CD4-positive, alpha-beta memory T cell (primary cell): ENCODE measurements at regions of chr15 and their contacts with region 1.

Region 1: GRCh38 chr15:38683382-38684242 is 119.0 kb upstream of the RASGRP1 start:
- DNase-seq: peak; percentile 68 to 76 (median 73)
- H3K4me3 ChIP-seq: no peak overlapping the region
- H3K4me3 Mint-ChIP-seq: peak overlapping the region in 7 of 8 donors; percentile 27 to 77 (median 55)
- H3K27ac ChIP-seq: peak overlapping the region; percentile 31
- H3K27ac Mint-ChIP-seq: peak overlapping the region; percentile 78 to 96 (median 94)
- H3K4me1 ChIP-seq: peaks cover 65% of the 10 kb centered on the region
- H3K4me1 Mint-ChIP-seq: peaks cover 61 to 73% (median 63%) of the 10 kb centered on the region in 4 donors
- H3K27me3 ChIP-seq: no peaks in the 10 kb centered on the region
- H3K27me3 Mint-ChIP-seq: no peaks in the 10 kb centered on the region

Region 2: GRCh38 chr15:37574985-37575384 is 1108.6 kb before region 1 on chr15:
- CTCF ChIA-PET with region 1: no interaction called
- POLR2A ChIA-PET with region 1: no interaction called
- intact Hi-C with region 1: no loop called
- DNase-seq: no peak
- H3K4me3 ChIP-seq: no peak overlapping the region
- H3K4me3 Mint-ChIP-seq: no peak overlapping the region
- H3K27ac ChIP-seq: no peak overlapping the region
- H3K27ac Mint-ChIP-seq: no peak overlapping the region
- H3K4me1 ChIP-seq: no peaks in the 10 kb centered on the region
- H3K4me1 Mint-ChIP-seq: no peaks in the 10 kb centered on the region
- H3K27me3 ChIP-seq: no peaks in the 10 kb centered on the region
- H3K27me3 Mint-ChIP-seq: no peaks in the 10 kb centered on the region

Region 3: GRCh38 chr15:38440353-38441129 is 243.1 kb before region 1 on chr15:
- CTCF ChIA-PET with region 1: interaction called, 83 read pairs
- POLR2A ChIA-PET with region 1: interaction called, 6 read pairs
- intact Hi-C with region 1: no loop called
- DNase-seq: peak in 4 of 5 donors; percentile 59 to 66 (median 62)
- H3K4me3 ChIP-seq: no peak overlapping the region
- H3K4me3 Mint-ChIP-seq: peak overlapping the region in 1 of 8 donors; percentile 55
- H3K27ac ChIP-seq: no peak overlapping the region
- H3K27ac Mint-ChIP-seq: peak overlapping the region in 1 of 7 donors; percentile 12
- H3K4me1 ChIP-seq: peaks cover 5% of the 10 kb centered on the region
- H3K4me1 Mint-ChIP-seq: peaks cover 0 to 7% (median 3%) of the 10 kb centered on the region in 4 donors
- H3K27me3 ChIP-seq: no peaks in the 10 kb centered on the region
- H3K27me3 Mint-ChIP-seq: peaks cover 20 to 21% of the 10 kb centered on the region in 2 donors

Region 4: GRCh38 chr15:38521316-38521715 is 162.3 kb before region 1 on chr15:
- CTCF ChIA-PET with region 1: interaction called, 14 read pairs
- POLR2A ChIA-PET with region 1: interaction called, 4 read pairs
- intact Hi-C with region 1: no loop called
- DNase-seq: no peak
- H3K4me3 ChIP-seq: no peak overlapping the region
- H3K4me3 Mint-ChIP-seq: no peak overlapping the region
- H3K27ac ChIP-seq: no peak overlapping the region
- H3K27ac Mint-ChIP-seq: peak overlapping the region; percentile 57 to 87 (median 78)
- H3K4me1 ChIP-seq: peaks cover 39% of the 10 kb centered on the region
- H3K4me1 Mint-ChIP-seq: peaks cover 41 to 61% (median 51%) of the 10 kb centered on the region in 4 donors
- H3K27me3 ChIP-seq: no peaks in the 10 kb centered on the region
- H3K27me3 Mint-ChIP-seq: no peaks in the 10 kb centered on the region

Region 5: GRCh38 chr15:38554354-38554753 is 129.3 kb before region 1 on chr15:
- CTCF ChIA-PET with region 1: interaction called, 717 read pairs
- POLR2A ChIA-PET with region 1: interaction called, 452 read pairs
- intact Hi-C with region 1: no loop called
- DNase-seq: peak in 3 of 5 donors; percentile 37 to 74 (median 51)
- H3K4me3 ChIP-seq: peak overlapping the region in 1 of 2 donors; percentile 10
- H3K4me3 Mint-ChIP-seq: peak overlapping the region; percentile 3 to 99 (median 89)
- H3K27ac ChIP-seq: peak overlapping the region; percentile 89
- H3K27ac Mint-ChIP-seq: peak overlapping the region; percentile 64 to 97 (median 79)
- H3K4me1 ChIP-seq: peaks cover 100% of the 10 kb centered on the region
- H3K4me1 Mint-ChIP-seq: peaks cover 80 to 94% (median 88%) of the 10 kb centered on the region in 4 donors
- H3K27me3 ChIP-seq: no peaks in the 10 kb centered on the region
- H3K27me3 Mint-ChIP-seq: no peaks in the 10 kb centered on the region

Region 6: GRCh38 chr15:38647683-38648082 is 35.9 kb before region 1 on chr15:
- CTCF ChIA-PET with region 1: interaction called, 451 read pairs
- POLR2A ChIA-PET with region 1: interaction called, 520 read pairs
- intact Hi-C with region 1: no loop called
- DNase-seq: no peak
- H3K4me3 ChIP-seq: no peak overlapping the region
- H3K4me3 Mint-ChIP-seq: peak overlapping the region in 2 of 8 donors; percentile 6 to 52
- H3K27ac ChIP-seq: peak overlapping the region; percentile 4
- H3K27ac Mint-ChIP-seq: peak overlapping the region; percentile 70 to 96 (median 91)
- H3K4me1 ChIP-seq: peaks cover 81% of the 10 kb centered on the region
- H3K4me1 Mint-ChIP-seq: peaks cover 55 to 78% (median 68%) of the 10 kb centered on the region in 4 donors
- H3K27me3 ChIP-seq: no peaks in the 10 kb centered on the region
- H3K27me3 Mint-ChIP-seq: no peaks in the 10 kb centered on the region

Region 7: DNA sequence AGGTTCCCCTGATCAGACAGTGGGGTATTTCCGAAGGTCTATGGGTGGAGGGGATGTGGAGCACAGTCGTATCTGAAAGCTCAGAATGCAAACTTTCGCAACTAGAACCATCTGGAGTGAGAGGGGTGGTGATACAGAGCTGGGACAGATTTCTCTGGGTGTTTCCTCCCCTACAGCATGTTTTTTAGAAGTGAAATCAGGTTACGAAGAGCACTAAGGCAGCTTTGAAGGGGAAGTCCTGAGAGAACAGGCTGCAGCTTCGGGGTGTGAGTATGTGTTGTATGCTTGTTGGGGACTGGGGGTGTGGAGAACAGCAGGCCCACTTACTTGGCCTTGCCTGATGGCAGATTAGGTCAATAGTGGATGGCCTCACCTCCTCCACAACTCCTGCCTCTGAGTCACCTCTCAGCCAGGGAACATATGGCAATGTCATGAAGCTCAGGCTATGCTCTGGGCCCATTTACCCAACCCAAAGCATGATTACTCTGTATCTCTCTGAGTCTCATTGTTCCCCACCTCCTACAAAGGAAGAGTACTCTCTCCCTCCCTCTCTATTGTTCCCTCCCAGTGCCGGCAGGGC is 11.8 kb before region 1 on chr15:
- CTCF ChIA-PET with region 1: interaction called, 186 read pairs
- POLR2A ChIA-PET with region 1: interaction called, 208 read pairs
- intact Hi-C with region 1: loop called (anchors 1 kb)
- DNase-seq: peak; percentile 70 to 87 (median 78)
- H3K4me3 ChIP-seq: peak overlapping the region; percentile 1 to 24
- H3K4me3 Mint-ChIP-seq: peak overlapping the region in 7 of 8 donors; percentile 67 to 79 (median 72)
- H3K27ac ChIP-seq: peak overlapping the region; percentile 89
- H3K27ac Mint-ChIP-seq: peak overlapping the region; percentile 94 to 100 (median 99)
- H3K4me1 ChIP-seq: peaks cover 83% of the 10 kb centered on the region
- H3K4me1 Mint-ChIP-seq: peaks cover 57 to 79% (median 64%) of the 10 kb centered on the region in 4 donors
- H3K27me3 ChIP-seq: no peaks in the 10 kb centered on the region
- H3K27me3 Mint-ChIP-seq: no peaks in the 10 kb centered on the region